Activated naive CD4-positive, alpha-beta T cell treated with anti-CD3 and anti-CD28 coated beads for 36 hours (primary cell): ENCODE measurements at regions of chr18 and their contacts with region 1.

Region 1: DNA sequence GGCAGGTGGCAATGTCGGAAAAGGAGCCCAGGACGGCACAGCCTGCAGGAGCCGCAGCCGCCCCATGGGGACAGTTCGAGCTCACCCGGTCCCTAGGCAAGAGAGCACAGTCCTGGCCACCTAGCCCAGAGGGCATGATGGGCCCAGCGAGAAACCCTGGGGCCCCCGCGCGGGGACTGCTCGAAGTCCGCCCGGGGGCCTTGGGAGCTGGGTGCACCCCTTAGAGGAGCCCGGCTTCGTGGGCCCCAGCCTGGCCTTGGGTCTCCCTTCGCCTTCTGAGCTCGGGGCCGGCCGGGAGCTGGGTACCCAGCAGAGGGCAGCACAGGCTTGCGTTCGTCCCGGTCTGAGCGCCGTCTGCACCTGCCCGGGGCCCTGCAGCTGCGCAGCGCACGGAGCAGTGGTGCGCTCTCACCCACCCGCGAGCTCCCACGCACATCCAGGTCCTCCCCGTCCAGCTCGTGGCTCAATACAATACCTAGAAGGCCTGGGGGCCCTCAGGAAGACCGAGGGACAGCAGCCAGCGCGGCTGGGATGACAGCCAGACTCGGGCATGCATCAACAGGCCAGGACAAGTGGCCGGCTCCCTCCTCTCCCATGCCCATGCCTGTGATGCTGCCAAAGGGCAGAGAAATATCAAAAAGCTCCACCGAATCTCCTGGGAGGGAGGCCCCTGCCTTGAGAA is 96.2 kb upstream of the ZNF532 start:
- DNase-seq: peak; percentile 84
- H3K4me3 Mint-ChIP-seq: peak overlapping the region; percentile 15
- H3K27ac Mint-ChIP-seq: no peak overlapping the region
- H3K4me1 Mint-ChIP-seq: peaks cover 6% of the 10 kb centered on the region
- H3K27me3 Mint-ChIP-seq: peaks cover 36% of the 10 kb centered on the region

Region 2: DNA sequence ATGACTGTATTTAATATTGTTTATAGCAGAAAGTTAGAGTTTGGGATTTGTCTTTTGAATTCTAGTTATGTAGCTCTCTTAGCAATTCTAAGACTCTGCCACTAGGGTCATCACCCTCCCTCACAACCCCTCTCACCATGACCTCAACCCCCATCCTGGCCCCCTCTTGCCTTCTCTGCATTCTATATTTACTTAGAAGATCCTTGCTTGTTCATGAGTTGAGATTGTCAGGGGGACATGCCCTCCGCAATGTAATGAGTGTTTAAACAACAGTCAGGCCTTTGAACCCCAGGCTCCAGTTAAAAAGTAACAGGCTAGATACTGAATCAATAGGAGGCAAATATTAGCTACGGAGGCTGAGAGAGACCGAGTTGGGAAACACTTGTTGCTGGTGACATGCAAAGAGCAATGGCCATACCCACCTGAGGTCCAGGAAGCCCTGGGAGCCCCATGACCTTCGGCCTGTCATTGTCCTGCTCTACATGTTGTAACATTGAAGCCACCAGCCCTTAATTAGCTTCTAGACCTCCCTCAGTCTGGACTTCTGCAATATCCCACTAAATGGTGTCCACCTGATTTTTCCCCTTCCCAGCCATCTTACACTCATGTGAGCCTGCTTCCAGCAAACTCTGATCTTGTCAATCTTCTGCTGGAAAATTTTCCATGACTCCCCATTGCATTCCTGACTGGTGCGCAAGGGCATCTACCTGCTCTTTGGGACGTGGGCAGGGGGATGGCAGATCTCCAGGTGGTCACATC is 360.6 kb before region 1 on chr18:
- CTCF ChIA-PET with region 1: no interaction called
- intact Hi-C with region 1: no loop called
- DNase-seq: no peak
- H3K4me3 Mint-ChIP-seq: no peak overlapping the region
- H3K27ac Mint-ChIP-seq: no peak overlapping the region
- H3K4me1 Mint-ChIP-seq: no peaks in the 10 kb centered on the region
- H3K27me3 Mint-ChIP-seq: no peaks in the 10 kb centered on the region

Region 3: GRCh38 chr18:58493516-58494253 is 274.7 kb before region 1 on chr18:
- CTCF ChIA-PET with region 1: interaction called, 35 read pairs
- intact Hi-C with region 1: loop called (anchors 1 kb)
- DNase-seq: peak; percentile 90
- H3K4me3 Mint-ChIP-seq: peak overlapping the region; percentile 17
- H3K27ac Mint-ChIP-seq: no peak overlapping the region
- H3K4me1 Mint-ChIP-seq: peaks cover 11% of the 10 kb centered on the region
- H3K27me3 Mint-ChIP-seq: peaks cover 22% of the 10 kb centered on the region

Region 4: DNA sequence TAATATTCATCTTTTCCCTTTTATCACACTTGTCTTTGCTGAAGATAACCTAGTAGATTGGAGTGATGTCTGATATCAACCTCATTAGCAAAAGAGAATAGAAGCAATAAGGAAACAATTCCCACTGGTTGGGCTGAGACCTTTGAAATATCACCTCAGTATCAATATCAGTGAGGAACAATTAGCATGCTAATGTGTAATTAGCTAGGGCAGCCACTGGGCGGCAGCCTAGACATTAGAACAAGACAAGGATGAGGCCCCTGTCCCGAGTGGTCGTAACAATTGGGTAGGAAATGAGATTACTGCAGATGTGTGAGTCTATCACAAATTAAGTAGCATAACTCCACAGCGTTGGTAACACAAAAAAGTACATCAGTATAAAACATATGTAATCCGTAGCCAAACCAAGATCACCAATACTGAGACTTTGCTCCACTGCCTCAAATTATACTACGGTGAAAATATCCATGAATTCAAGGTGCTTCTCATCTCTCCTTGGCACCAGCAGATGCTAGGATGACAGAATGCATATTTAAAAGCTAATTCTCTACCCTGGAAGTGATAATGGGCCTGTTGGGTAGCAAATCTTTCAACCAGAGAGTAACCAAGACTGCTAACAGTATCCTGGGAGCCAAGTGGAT is 238.6 kb before region 1 on chr18:
- CTCF ChIA-PET with region 1: interaction called, 426 read pairs
- intact Hi-C with region 1: loop called (anchors 1 kb)
- DNase-seq: peak; percentile 80
- H3K4me3 Mint-ChIP-seq: no peak overlapping the region
- H3K27ac Mint-ChIP-seq: no peak overlapping the region
- H3K4me1 Mint-ChIP-seq: peaks cover 20% of the 10 kb centered on the region
- H3K27me3 Mint-ChIP-seq: peaks cover 3% of the 10 kb centered on the region

Region 5: DNA sequence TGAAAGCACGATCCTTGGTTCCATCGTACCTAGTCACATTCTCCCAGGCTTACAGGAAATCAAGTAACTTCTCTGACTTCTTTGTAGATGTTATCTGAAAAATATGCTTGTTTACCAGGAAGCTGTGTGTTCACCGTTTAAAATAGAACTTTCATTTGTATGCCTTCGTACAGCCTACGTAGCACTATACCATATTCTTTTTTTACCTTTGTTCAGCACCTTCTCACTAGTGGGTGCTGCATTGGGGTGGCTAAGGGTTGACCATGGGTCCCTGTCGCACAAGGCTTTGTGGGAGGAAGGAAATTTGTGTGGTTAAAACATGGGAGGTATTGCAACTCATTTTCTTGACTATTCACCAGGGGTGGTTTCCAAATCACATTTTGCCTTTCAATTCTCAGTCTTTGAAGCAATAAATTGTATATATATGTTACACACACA is 80.5 kb before region 1 on chr18:
- CTCF ChIA-PET with region 1: interaction called, 16 read pairs
- intact Hi-C with region 1: no loop called
- DNase-seq: peak; percentile 64
- H3K4me3 Mint-ChIP-seq: peak overlapping the region; percentile 70
- H3K27ac Mint-ChIP-seq: peak overlapping the region; percentile 87
- H3K4me1 Mint-ChIP-seq: peaks cover 78% of the 10 kb centered on the region
- H3K27me3 Mint-ChIP-seq: no peaks in the 10 kb centered on the region

Region 6: DNA sequence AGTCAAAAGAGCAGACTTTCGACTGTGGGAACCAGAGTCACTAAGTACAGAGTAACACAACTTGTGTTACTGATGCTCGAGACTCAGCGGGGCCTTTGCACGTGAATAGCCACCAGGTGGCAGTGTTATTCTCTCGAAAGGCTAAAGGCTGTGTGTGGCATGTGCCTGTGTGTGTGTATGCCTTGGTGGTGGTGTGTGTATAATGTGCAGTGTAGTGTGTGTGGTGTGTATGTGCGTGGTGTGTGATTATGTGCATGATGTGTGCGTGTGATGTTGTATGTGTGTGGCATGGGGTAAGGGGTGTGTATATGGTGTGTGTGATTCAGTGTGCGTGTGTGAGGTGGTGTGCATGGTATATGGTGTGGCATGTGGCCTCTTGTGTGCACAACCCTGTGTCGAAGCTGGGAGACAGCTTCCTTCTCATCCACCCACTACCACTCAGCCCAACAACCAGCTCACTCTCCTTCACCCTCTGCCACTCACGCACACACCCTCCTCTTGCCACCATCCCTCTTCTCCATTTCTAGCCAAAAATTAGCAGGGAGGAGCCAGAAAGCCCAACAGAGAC is 13.3 kb after region 1 on chr18:
- CTCF ChIA-PET with region 1: interaction called, 44 read pairs
- intact Hi-C with region 1: no loop called
- DNase-seq: peak; percentile 85
- H3K4me3 Mint-ChIP-seq: no peak overlapping the region
- H3K27ac Mint-ChIP-seq: no peak overlapping the region
- H3K4me1 Mint-ChIP-seq: no peaks in the 10 kb centered on the region
- H3K27me3 Mint-ChIP-seq: peaks cover 21% of the 10 kb centered on the region